Heart left ventricle (tissue), 16 donors: ENCODE measurements at regions of chr9 and their contacts with region 1.

Region 1: GRCh38 chr9:23492126-23493002 is 333.7 kb downstream of the ELAVL2 start:
- DNase-seq: no peak
- ATAC-seq: peak in 2 of 4 donors; percentile 39 to 57
- H3K4me3 ChIP-seq: no peak overlapping the region
- H3K27ac ChIP-seq: no peak overlapping the region
- H3K4me1 ChIP-seq: no peaks in the 10 kb centered on the region
- H3K27me3 ChIP-seq: no peaks in the 10 kb centered on the region
- CTCF ChIP-seq: peak in 11 of 12 donors; percentile 17 to 62 (median 40)
- POLR2A ChIP-seq: no peak

Region 2: DNA sequence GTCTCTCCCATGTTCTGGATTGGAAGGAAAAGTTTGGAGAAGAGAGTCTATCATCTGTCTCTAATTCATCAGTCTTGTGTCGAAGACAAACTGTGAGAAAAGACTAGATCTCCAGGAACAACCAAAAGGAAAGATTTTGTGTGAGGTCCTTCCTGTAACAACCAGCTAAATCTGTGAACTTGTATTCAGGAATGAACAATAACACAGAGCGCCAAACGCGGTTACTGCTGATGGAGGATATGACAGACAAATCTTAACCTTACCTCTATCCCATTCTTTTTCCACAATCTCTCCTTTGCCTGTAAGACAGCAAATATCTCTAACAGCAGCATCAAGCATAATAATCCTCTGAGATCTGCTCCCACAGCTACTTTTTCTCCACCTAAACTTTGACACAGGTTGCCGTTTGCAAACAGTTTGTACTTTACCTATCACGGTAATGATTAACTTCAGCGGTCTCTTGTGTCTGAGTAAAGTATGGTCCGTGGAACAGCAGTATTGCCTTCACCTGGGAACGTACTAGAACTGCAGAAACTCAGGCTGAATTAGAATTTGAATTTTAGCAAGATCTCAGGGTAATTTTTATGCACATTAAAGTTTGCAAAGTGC is 54.0 kb before region 1 on chr9:
- intact Hi-C with region 1: loop called in 1 of 10 experiments (anchors 10 kb)
- DNase-seq: no peak
- ATAC-seq: no peak
- H3K4me3 ChIP-seq: no peak overlapping the region
- H3K27ac ChIP-seq: no peak overlapping the region
- H3K4me1 ChIP-seq: no peaks in the 10 kb centered on the region
- H3K27me3 ChIP-seq: peaks cover 0 to 3% (median 0%) of the 10 kb centered on the region in 9 donors
- CTCF ChIP-seq: no peak
- POLR2A ChIP-seq: no peak

Region 3: GRCh38 chr9:23451802-23452418 is 40.5 kb before region 1 on chr9:
- intact Hi-C with region 1: no loop called
- DNase-seq: no peak
- ATAC-seq: no peak
- H3K4me3 ChIP-seq: no peak overlapping the region
- H3K27ac ChIP-seq: no peak overlapping the region
- H3K4me1 ChIP-seq: no peaks in the 10 kb centered on the region
- H3K27me3 ChIP-seq: no peaks in the 10 kb centered on the region
- CTCF ChIP-seq: no peak
- POLR2A ChIP-seq: no peak

Region 4: GRCh38 chr9:23702311-23702922 is 210.1 kb after region 1 on chr9:
- intact Hi-C with region 1: no loop called
- DNase-seq: no peak
- ATAC-seq: no peak
- H3K4me3 ChIP-seq: no peak overlapping the region
- H3K27ac ChIP-seq: no peak overlapping the region
- H3K4me1 ChIP-seq: no peaks in the 10 kb centered on the region
- H3K27me3 ChIP-seq: no peaks in the 10 kb centered on the region
- CTCF ChIP-seq: no peak
- POLR2A ChIP-seq: no peak

Region 5: GRCh38 chr9:23769307-23769935 is 277.1 kb after region 1 on chr9:
- intact Hi-C with region 1: no loop called
- DNase-seq: no peak
- ATAC-seq: no peak
- H3K4me3 ChIP-seq: no peak overlapping the region
- H3K27ac ChIP-seq: no peak overlapping the region
- H3K4me1 ChIP-seq: peaks cover 0 to 3% (median 0%) of the 10 kb centered on the region in 12 donors
- H3K27me3 ChIP-seq: no peaks in the 10 kb centered on the region
- CTCF ChIP-seq: no peak
- POLR2A ChIP-seq: no peak

Region 6: DNA sequence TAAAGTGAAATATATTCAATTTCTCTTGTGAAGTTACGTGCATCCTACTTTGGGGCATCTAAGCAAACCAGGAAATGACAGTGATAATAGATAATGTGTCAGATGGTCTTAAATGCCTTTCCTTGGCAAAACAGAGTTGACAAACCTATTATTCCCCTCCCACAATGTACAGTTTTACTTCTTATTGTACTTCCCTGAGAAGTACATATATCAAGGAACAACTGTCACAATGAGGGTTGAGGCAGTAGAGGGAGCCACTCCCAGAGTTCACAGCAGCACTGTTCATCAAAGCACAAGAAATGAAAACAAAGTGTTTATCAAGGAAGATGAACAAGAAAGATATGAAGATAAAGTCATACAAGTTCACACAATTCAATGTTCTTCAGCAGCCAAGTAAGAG is 292.6 kb after region 1 on chr9:
- intact Hi-C with region 1: no loop called
- DNase-seq: no peak
- ATAC-seq: no peak
- H3K4me3 ChIP-seq: no peak overlapping the region
- H3K27ac ChIP-seq: no peak overlapping the region
- H3K4me1 ChIP-seq: no peaks in the 10 kb centered on the region
- H3K27me3 ChIP-seq: no peaks in the 10 kb centered on the region
- CTCF ChIP-seq: no peak
- POLR2A ChIP-seq: no peak